Activated B cell treated with CpG ODN at 0.5 μM for 24 hours (primary cell): ENCODE measurements at regions of chr17 and their contacts with region 1.

Region 1: DNA sequence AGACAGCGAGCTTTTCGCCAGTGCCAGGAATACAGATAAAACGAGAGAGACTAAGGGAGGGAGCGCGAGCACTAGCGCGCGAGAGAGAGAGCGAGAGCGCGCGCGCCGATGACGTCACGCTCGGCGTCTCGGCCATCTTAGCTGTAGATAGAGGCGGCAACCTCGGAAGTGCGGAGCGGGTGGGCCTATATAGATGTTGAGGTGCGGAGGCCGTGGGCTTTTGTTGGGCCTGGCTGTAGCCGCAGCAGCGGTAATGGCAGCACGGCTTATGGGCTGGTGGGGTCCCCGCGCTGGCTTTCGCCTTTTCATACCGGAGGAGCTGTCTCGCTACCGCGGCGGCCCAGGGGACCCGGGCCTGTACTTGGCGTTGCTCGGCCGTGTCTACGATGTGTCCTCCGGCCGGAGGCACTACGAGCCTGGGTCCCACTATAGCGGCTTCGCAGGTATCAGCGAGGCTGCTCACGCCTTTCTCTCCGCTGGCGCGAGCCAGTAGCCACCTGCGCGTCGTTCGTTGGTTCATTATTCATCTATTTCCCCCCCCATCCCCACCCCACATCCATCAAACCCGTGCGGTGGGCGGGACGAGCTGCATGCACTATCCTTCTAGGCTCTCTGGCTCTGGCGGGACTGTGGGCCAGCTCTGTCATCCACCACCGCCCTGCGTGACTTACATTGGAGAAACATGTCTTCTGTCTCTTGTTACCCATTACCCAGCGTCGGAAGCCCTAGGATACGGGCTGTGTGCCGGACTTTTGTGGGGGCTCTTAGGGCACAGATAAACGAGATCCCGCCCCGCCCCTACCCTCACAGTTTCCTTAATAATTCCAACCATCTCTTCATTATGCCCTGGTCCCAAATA is 795 bp downstream of the CYB5D2 start:
- DNase-seq: peak; percentile 84
- ATAC-seq: peak; percentile 70
- H3K4me3 Mint-ChIP-seq: peak overlapping the region; percentile 98
- H3K27ac Mint-ChIP-seq: peak overlapping the region; percentile 99
- H3K4me1 Mint-ChIP-seq: peaks cover 37% of the 10 kb centered on the region
- H3K27me3 Mint-ChIP-seq: no peaks in the 10 kb centered on the region
- CTCF ChIP-seq: no peak

Region 2: DNA sequence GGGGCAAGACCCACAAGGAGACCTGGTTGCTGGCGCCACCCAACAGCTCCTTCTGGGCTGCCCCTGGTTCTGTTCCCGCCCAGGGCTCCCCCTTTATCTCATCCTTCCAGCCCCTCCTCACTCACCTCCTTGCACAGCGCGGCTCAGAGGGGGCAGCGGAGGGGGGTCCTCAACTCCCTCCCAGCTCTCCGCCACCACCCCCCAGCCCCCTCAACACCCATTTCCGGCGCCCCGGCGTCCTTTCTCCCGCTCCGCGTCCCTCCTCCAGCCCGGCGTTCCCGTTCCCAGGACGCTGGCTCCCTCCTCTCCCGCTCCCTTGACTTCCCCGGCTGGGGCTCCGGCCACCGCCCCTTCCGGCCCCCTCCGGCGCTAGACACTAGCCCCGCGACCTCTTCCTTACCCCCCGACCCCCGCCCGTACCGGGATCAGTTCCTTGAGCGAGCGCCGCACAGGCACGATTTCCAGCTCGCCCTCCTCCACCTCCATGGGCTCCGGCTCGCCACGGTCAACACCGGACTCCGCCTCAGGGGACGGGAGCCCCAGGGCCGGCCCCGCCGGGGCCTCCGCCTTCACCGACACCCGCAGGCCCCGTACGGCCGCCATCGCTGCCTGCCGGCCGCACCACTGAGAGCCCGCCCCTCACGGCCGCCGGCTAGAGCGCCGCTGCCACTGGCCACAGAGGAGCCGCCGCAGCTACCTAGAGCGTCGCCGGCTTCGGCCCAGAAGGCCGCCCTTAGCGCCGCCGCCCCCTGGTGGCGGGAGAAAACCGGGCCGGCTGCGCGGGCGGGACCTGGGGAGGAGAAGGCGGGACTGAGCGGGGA is 298.0 kb before region 1 on chr17 and contains the start of gene NCBP3:
- CTCF ChIA-PET with region 1: no interaction called
- POLR2A ChIA-PET with region 1: interaction called, 19 read pairs
- intact Hi-C with region 1: loop called (anchors 1 kb)
- DNase-seq: peak; percentile 92
- ATAC-seq: peak; percentile 96
- H3K4me3 Mint-ChIP-seq: peak within 1 kb of the TSS; percentile 92
- H3K27ac Mint-ChIP-seq: peak within 1 kb of the TSS; percentile 83
- H3K4me1 Mint-ChIP-seq: peaks cover 21% of the 10 kb centered on the region
- H3K27me3 Mint-ChIP-seq: peaks cover 2% of the 10 kb centered on the region
- CTCF ChIP-seq: no peak
- total RNA-seq, gene NCBP3: 49.5 TPM in 2 replicates

Region 3: DNA sequence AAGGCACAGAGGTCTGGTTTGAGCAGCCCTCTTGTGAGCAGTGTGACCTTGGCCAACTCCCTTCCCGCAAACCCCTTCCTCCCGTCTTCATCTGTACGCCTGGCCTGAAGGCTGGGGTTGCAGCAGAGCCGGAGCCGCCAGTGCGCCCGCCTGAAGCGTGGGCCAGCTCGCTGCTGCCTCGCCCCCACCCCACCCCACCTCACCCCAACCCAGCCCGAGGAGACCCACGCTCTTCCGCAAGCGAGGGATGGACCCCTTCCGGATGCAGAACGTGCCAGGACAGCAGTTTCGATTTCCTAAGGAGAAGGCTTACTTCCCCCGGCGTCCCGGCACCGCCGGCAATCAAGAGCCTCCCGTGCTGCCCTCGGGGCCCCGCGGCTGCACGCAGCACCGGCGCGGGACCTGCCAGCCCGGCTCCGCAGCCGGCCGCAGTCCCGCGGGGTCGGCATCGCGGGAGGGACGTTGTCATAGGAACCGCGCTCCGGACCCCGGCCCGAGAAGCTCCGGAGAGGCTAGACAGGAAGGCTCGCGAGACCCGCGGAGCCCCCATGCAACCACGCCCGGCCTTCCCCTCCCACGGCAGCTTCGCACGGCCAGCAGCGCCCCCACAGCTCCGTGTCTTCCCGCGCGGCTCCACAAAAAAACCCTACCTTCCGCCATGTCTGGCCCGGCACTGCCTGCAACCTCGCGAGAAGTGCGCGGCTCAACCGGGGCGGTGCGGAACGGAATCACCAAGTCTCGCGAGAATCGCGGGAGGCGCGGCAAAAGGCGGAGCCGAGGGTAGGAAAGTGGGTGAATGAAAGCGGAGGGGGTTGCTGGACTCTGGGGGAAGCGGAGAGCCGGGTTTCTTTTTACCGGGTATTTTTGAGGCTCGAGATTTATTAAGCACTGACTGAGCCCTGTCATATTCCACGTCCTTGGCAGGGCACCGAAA is 119.8 kb after region 1 on chr17 and contains the start of gene ANKFY1:
- CTCF ChIA-PET with region 1: no interaction called
- POLR2A ChIA-PET with region 1: interaction called, 8 read pairs
- intact Hi-C with region 1: loop called (anchors 5 kb)
- DNase-seq: peak; percentile 98
- ATAC-seq: peak; percentile 98
- H3K4me3 Mint-ChIP-seq: peak within 1 kb of the TSS; percentile 95
- H3K27ac Mint-ChIP-seq: peak within 1 kb of the TSS; percentile 86
- H3K4me1 Mint-ChIP-seq: peaks cover 34% of the 10 kb centered on the region
- H3K27me3 Mint-ChIP-seq: no peaks in the 10 kb centered on the region
- CTCF ChIP-seq: no peak
- total RNA-seq, gene ANKFY1: 41.6 and 50.2 TPM in 2 replicates

Region 4: GRCh38 chr17:4833178-4833940 is 689.6 kb after region 1 on chr17 and contains the start of gene MINK1:
- CTCF ChIA-PET with region 1: no interaction called
- POLR2A ChIA-PET with region 1: no interaction called
- intact Hi-C with region 1: loop called (anchors 1 kb)
- DNase-seq: peak; percentile 88
- ATAC-seq: peak; percentile 95
- H3K4me3 Mint-ChIP-seq: peak within 1 kb of the TSS; percentile 94
- H3K27ac Mint-ChIP-seq: peak within 1 kb of the TSS; percentile 96
- H3K4me1 Mint-ChIP-seq: peaks cover 33% of the 10 kb centered on the region
- H3K27me3 Mint-ChIP-seq: no peaks in the 10 kb centered on the region
- CTCF ChIP-seq: no peak
- total RNA-seq, gene MINK1: 61.3 and 65.3 TPM in 2 replicates

Region 5: DNA sequence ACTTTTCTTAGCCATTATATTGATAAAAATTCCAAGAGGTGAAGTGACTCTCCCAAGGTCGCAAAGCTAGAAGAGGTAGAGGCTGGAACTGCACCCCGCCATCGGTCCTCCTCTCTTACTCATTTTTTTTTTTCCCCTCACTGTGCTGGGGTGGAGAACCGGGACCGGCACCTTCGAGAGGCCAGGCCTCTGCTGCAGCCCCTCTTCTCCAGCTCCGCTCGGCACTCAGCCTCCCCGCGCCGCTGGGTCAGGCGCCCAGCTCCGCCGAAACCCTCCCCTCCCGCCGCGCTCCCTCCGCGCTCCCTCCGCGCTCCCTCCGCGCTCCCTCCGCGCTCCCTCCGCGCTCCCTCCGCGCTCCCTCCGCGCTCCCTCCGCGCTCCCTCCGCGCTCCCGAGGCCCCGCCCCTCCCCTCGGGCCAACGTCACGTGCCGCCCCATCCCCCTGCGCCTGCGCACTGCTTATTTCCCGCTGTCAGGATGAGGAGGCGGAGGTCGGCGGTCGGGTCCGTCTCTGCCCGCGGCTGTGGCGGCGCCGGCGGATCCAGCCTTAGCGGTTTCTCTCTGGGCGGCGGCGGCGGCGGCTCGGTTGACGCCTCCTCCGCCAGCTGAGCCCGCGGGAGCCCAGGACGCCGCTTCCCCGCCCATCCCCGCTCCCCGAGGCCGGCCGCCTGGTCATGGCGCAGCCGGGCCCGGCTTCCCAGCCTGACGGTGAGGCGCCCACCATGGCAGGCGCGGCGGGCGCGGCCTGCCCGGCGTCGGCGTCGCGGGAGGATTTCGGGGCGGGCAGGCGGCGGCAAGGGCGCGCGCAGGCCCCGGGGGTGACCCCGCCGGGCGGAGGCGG is 1138.2 kb after region 1 on chr17 and contains the start of gene RABEP1:
- CTCF ChIA-PET with region 1: no interaction called
- POLR2A ChIA-PET with region 1: no interaction called
- intact Hi-C with region 1: loop called (anchors 5 kb)
- DNase-seq: peak; percentile 90
- ATAC-seq: peak; percentile 82
- H3K4me3 Mint-ChIP-seq: peak within 1 kb of the TSS; percentile 92
- H3K27ac Mint-ChIP-seq: peak within 1 kb of the TSS; percentile 91
- H3K4me1 Mint-ChIP-seq: peaks cover 46% of the 10 kb centered on the region
- H3K27me3 Mint-ChIP-seq: no peaks in the 10 kb centered on the region
- CTCF ChIP-seq: no peak
- total RNA-seq, gene RABEP1: 63.5 and 67.5 TPM in 2 replicates